ENCODE measurements at regions of chr2 and their contacts with region 1.

Region 1: GRCh38 chr2:24971536-24972314 is at the start of gene DNAJC27:
- DNase-seq: peak; percentile 97 to 99 (median 99)
- ATAC-seq: peak; percentile 93
- H3K4me3 ChIP-seq: peak within 1 kb of the TSS; percentile 90
- H3K4me3 Mint-ChIP-seq: peak within 1 kb of the TSS; percentile 96 to 99 (median 98)
- H3K27ac ChIP-seq: peak within 1 kb of the TSS; percentile 98
- H3K27ac Mint-ChIP-seq: peak within 1 kb of the TSS; percentile 99 to 100 (median 100)
- H3K4me1 ChIP-seq: peaks cover 0 to 17% of the 10 kb centered on the region in 2 donors
- H3K4me1 Mint-ChIP-seq: peaks cover 6 to 46% (median 30%) of the 10 kb centered on the region in 7 donors
- H3K27me3 ChIP-seq: no peaks in the 10 kb centered on the region
- H3K27me3 Mint-ChIP-seq: no peaks in the 10 kb centered on the region
- total RNA-seq, gene DNAJC27: 5.9 to 22.0 (median 18.1) TPM

Region 2: DNA sequence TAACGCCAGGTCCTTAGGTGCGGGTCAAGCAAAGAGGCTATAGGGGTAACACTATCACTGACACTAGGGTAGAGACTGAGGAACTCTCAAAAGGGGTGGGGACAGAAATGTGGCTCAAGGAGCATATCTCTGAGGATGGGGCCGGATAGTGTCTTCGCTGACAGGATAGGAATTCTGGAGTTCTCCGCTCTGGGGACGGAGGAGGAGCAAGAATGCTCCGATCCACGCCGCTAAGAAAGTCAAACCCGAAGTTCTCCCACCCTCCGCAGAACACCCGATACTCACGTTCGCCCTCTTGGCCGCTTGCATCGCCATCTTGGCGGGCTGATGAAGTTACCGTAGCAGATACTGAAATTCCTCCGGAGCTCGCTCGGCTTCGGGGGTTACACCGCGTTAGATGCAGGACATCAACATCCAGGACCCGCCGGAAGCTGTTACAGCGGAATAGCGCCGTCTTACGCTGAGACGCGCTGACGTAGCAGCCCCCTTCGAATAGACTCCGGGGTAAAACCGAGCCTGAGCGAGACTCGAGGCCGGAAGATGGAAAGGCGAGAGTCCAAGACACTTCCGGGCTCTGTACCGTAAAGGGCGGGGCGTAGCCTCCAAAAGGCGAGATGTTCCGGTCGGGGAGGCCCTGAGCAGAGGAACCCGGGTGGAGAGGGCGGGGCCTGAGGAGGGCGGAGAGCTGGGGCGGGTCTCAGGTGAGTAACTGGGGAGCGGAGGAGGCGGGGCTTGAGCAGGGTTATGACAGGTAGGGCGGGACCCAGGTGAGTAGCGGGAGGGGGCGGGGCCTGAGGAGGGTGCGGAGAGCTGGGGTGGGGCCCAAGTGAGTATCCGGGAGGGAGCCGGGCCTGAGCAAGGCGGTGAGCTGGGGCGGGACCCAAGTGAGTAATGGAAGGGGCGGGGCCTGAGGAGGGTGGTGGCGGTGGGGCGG is 895.5 kb before region 1 on chr2 and contains the start of gene SF3B6:
- CTCF ChIA-PET with region 1: no interaction called
- POLR2A ChIA-PET with region 1: no interaction called
- intact Hi-C with region 1: loop called (anchors 1 kb)
- DNase-seq: peak; percentile 97 to 100 (median 100)
- ATAC-seq: peak; percentile 89
- H3K4me3 ChIP-seq: peak within 1 kb of the TSS; percentile 97
- H3K4me3 Mint-ChIP-seq: peak within 1 kb of the TSS; percentile 93 to 99 (median 98)
- H3K27ac ChIP-seq: peak within 1 kb of the TSS; percentile 78
- H3K27ac Mint-ChIP-seq: peak within 1 kb of the TSS; percentile 96 to 99 (median 99)
- H3K4me1 ChIP-seq: peaks cover 13 to 21% of the 10 kb centered on the region in 2 donors
- H3K4me1 Mint-ChIP-seq: peaks cover 14 to 47% (median 42%) of the 10 kb centered on the region in 7 donors
- H3K27me3 ChIP-seq: no peaks in the 10 kb centered on the region
- H3K27me3 Mint-ChIP-seq: no peaks in the 10 kb centered on the region
- total RNA-seq, gene SF3B6: 42.4 to 100 (median 49.7) TPM

Region 3: DNA sequence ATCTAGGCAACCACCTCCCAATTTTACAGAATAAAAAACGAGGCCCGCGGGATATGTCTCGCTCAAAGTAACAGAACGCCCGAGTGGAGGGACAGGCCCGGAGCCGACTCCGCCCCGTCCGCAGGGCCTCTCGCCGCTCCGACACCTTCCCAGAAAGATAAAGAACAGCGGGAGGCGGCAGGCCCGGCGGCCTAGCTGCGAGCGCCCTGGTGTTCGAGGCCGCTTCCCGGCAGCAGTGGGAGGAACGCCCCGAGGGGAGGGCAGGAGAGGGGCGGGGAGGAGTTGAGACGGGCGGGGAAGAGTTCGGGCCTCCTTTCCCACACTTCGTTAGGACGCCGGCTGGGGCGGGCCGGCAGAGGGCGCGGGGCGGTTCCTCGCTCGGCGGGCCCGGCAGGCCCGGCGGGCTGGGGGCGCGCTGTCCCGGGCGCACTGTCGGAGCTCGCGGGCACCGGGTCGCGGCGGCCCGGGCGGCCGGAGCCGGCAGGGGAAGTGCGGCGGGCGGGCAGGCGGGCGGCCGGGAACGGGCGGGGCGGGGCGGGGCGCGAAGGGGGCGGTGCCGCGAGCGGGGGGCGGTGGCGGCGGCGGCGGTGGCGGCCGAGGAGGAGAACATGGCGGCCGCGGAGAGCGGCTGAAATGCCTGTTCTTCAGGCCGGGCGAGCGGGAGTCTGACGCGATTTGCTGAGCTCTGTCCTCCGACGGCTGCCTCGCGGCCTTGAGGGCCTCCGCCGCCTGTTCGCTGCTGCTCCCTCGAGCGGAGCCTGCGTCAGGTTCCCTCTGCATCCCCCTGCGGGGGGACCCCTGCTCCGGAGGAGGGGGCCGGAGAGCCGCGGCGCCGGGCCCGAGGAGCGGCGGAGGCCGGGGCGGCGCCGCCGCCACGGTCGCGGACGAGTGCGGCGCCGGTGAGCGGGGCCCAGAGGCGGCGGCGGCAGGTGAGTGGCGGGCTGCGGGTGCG is 480.8 kb before region 1 on chr2 and contains the start of gene NCOA1:
- CTCF ChIA-PET with region 1: no interaction called
- POLR2A ChIA-PET with region 1: no interaction called
- intact Hi-C with region 1: loop called (anchors 1 kb)
- DNase-seq: peak; percentile 82 to 92 (median 90)
- ATAC-seq: peak; percentile 91
- H3K4me3 ChIP-seq: peak within 1 kb of the TSS; percentile 63
- H3K4me3 Mint-ChIP-seq: peak within 1 kb of the TSS; percentile 80 to 95 (median 90)
- H3K27ac ChIP-seq: peak within 1 kb of the TSS; percentile 93
- H3K27ac Mint-ChIP-seq: peak within 1 kb of the TSS; percentile 87 to 98 (median 93)
- H3K4me1 ChIP-seq: peaks cover 26 to 48% of the 10 kb centered on the region in 2 donors
- H3K4me1 Mint-ChIP-seq: peaks cover 46 to 62% (median 59%) of the 10 kb centered on the region in 7 donors
- H3K27me3 ChIP-seq: no peaks in the 10 kb centered on the region
- H3K27me3 Mint-ChIP-seq: peaks cover 0 to 11% (median 0%) of the 10 kb centered on the region in 5 donors
- total RNA-seq, gene NCOA1: 20.9 to 72.8 (median 46.6) TPM

Region 4: GRCh38 chr2:24855726-24856125 is 116.0 kb before region 1 on chr2:
- CTCF ChIA-PET with region 1: no interaction called
- POLR2A ChIA-PET with region 1: no interaction called
- intact Hi-C with region 1: no loop called
- DNase-seq: no peak
- ATAC-seq: no peak
- H3K4me3 ChIP-seq: no peak overlapping the region
- H3K4me3 Mint-ChIP-seq: no peak overlapping the region
- H3K27ac ChIP-seq: no peak overlapping the region
- H3K27ac Mint-ChIP-seq: no peak overlapping the region
- H3K4me1 ChIP-seq: no peaks in the 10 kb centered on the region
- H3K4me1 Mint-ChIP-seq: peaks cover 0 to 7% (median 0%) of the 10 kb centered on the region in 7 donors
- H3K27me3 ChIP-seq: no peaks in the 10 kb centered on the region
- H3K27me3 Mint-ChIP-seq: no peaks in the 10 kb centered on the region

Region 5: GRCh38 chr2:25041928-25042320 is 70.2 kb after region 1 on chr2 and contains the start of gene EFR3B:
- CTCF ChIA-PET with region 1: no interaction called
- POLR2A ChIA-PET with region 1: no interaction called
- intact Hi-C with region 1: loop called (anchors 1 kb)
- DNase-seq: peak; percentile 77 to 88 (median 86)
- ATAC-seq: peak; percentile 99
- H3K4me3 ChIP-seq: peak within 1 kb of the TSS; percentile 73
- H3K4me3 Mint-ChIP-seq: peak within 1 kb of the TSS; percentile 79 to 91 (median 89)
- H3K27ac ChIP-seq: peak within 1 kb of the TSS; percentile 18
- H3K27ac Mint-ChIP-seq: peak within 1 kb of the TSS in 6 of 9 donors; percentile 8 to 88 (median 54)
- H3K4me1 ChIP-seq: peaks cover 13 to 17% of the 10 kb centered on the region in 2 donors
- H3K4me1 Mint-ChIP-seq: peaks cover 18 to 30% (median 20%) of the 10 kb centered on the region in 7 donors
- H3K27me3 ChIP-seq: peaks cover 7 to 8% of the 10 kb centered on the region in 2 donors
- H3K27me3 Mint-ChIP-seq: peaks cover 34 to 59% (median 37%) of the 10 kb centered on the region in 5 donors
- total RNA-seq, gene EFR3B: 0.05 to 0.08 (median 0.07) TPM in 3 of 5 experiments, not detected in the others

Region 6: DNA sequence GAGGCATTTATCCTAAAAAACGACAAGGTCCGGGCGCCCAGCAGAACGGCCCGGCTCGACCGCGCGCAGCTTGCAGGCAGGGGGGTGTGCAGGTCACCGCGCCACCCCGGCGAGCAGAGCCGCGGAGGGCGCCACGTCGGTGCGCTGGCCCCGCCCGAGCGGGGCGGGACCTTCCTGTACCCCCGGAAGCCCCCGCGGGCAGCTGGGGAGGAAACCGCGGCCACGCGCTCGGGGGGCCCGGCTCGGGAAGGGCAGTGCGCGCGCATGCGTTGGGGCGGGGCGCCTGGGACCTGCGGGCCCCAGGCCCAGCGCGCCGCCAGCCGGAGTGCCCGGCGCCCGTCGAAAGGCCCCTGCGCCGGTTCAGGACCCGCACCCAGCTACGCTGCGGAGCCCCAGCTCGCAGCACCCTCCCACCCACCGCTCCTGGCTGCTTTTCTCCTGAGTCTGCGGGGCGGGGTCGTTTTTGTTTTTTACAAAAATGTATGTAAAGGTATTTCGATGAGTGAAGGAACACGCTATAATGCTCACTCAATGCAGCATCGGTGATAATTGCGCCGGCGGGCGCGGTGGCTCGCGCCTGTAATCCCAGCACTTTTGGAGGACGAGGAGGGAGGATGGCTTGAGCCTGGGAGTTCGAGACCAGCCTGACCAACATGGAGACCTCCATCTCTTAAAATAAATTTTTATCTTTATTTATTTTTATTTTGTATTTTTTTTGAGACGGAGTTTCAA is 244.4 kb after region 1 on chr2:
- CTCF ChIA-PET with region 1: no interaction called
- POLR2A ChIA-PET with region 1: interaction called, 3 read pairs
- intact Hi-C with region 1: loop called in 1 of 2 experiments (anchors 5 kb)
- DNase-seq: peak; percentile 73 to 88 (median 85)
- ATAC-seq: peak; percentile 96
- H3K4me3 ChIP-seq: peak overlapping the region; percentile 61
- H3K4me3 Mint-ChIP-seq: peak overlapping the region; percentile 71 to 88 (median 78)
- H3K27ac ChIP-seq: peak overlapping the region; percentile 74
- H3K27ac Mint-ChIP-seq: peak overlapping the region; percentile 64 to 94 (median 89)
- H3K4me1 ChIP-seq: peaks cover 0 to 6% of the 10 kb centered on the region in 2 donors
- H3K4me1 Mint-ChIP-seq: peaks cover 9 to 33% (median 18%) of the 10 kb centered on the region in 7 donors
- H3K27me3 ChIP-seq: no peaks in the 10 kb centered on the region
- H3K27me3 Mint-ChIP-seq: no peaks in the 10 kb centered on the region

Region 7: DNA sequence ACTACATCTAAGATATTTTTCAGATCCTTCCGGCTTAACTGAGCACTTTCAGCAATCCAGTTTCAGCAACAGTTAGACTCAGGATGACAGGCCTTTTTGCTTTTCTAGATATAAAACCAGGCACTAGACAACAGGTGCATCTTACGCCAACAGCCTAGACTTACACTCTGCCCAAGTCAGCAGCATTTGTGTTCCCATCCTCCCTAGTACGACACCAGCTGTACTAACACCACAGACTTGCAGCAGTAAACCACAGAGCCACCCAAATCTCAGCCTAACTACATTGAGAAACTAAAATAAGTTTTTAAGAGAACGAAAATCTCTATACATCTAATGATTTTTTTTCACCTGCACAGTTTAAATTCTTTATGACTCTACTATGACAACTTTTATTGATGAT is 459.9 kb after region 1 on chr2:
- CTCF ChIA-PET with region 1: no interaction called
- POLR2A ChIA-PET with region 1: no interaction called
- intact Hi-C with region 1: no loop called
- DNase-seq: no peak
- ATAC-seq: no peak
- H3K4me3 ChIP-seq: no peak overlapping the region
- H3K4me3 Mint-ChIP-seq: no peak overlapping the region
- H3K27ac ChIP-seq: no peak overlapping the region
- H3K27ac Mint-ChIP-seq: no peak overlapping the region
- H3K4me1 ChIP-seq: no peaks in the 10 kb centered on the region
- H3K4me1 Mint-ChIP-seq: peaks cover 0 to 13% (median 0%) of the 10 kb centered on the region in 7 donors
- H3K27me3 ChIP-seq: no peaks in the 10 kb centered on the region
- H3K27me3 Mint-ChIP-seq: no peaks in the 10 kb centered on the region

Region 8: DNA sequence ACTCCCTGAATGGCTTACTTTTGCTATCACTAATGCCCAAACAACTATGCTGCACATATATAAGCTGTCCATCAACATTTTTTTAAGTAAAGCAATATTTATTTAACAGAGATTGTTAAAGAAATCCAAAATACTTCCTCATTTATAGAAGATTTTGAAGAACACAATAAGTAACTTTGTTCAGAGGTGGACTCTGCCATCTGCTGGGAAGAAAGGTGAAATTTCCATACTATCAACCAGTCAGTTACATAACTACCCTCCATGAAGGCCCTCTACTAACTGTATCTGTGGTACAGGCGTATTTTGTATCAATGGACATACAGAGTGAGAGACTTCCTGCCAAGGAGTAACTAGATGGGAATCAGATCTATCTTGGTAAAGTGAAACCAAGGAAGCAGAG is 595.7 kb after region 1 on chr2:
- CTCF ChIA-PET with region 1: no interaction called
- POLR2A ChIA-PET with region 1: no interaction called
- intact Hi-C with region 1: loop called in 1 of 2 experiments (anchors 10 kb)
- DNase-seq: peak in 4 of 9 donors; percentile 6 to 27 (median 16)
- ATAC-seq: peak; percentile 67
- H3K4me3 ChIP-seq: no peak overlapping the region
- H3K4me3 Mint-ChIP-seq: no peak overlapping the region
- H3K27ac ChIP-seq: no peak overlapping the region
- H3K27ac Mint-ChIP-seq: peak overlapping the region in 1 of 9 donors; percentile 47
- H3K4me1 ChIP-seq: no peaks in the 10 kb centered on the region
- H3K4me1 Mint-ChIP-seq: peaks cover 0 to 14% (median 4%) of the 10 kb centered on the region in 7 donors
- H3K27me3 ChIP-seq: no peaks in the 10 kb centered on the region
- H3K27me3 Mint-ChIP-seq: no peaks in the 10 kb centered on the region

Region 9: DNA sequence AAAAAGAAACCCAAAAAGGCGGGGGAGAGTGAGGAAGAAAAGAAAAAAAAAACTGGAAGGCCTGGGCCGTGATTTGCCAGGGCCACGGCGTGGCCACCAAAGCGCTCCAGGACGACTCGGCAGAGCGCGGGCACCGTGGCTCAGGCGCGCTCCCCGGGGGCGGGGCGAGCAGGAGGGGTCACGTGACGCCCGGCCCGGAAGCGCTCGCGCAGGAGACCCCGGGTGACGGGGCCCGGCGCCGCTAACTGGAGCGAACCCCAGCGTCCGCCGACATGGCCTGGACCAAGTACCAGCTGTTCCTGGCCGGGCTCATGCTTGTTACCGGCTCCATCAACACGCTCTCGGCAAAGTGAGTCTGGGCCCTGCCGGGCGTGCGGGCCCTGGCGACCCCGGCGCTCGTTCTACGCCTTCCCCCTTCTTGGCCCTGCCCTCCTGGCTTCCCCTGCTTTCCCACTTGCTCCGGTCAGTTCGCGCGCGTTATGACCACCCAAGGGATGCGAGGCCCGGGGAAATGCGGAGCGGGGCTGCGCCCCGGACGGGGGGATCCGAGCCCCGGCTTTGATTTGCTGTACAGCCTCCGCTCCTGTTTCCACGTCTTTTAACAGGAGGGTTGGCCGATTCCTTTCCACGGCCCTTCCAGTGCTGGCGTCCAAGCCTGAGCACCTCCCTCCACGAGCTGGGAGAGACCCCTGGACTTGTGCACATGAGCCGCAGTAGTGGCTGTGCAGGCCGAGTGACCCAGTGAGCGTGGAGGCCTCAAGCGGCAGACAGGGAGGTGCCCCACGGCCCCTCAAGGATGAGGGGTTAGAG is 1792.6 kb after region 1 on chr2 and contains the start of gene SLC35F6:
- CTCF ChIA-PET with region 1: no interaction called
- POLR2A ChIA-PET with region 1: no interaction called
- intact Hi-C with region 1: loop called in 1 of 2 experiments (anchors 5 kb)
- DNase-seq: peak; percentile 70 to 90 (median 86)
- ATAC-seq: peak; percentile 95
- H3K4me3 ChIP-seq: peak within 1 kb of the TSS; percentile 92
- H3K4me3 Mint-ChIP-seq: peak within 1 kb of the TSS; percentile 85 to 97 (median 94)
- H3K27ac ChIP-seq: peak within 1 kb of the TSS; percentile 82
- H3K27ac Mint-ChIP-seq: peak within 1 kb of the TSS; percentile 62 to 97 (median 91)
- H3K4me1 ChIP-seq: peaks cover 23% of the 10 kb centered on the region in 2 donors
- H3K4me1 Mint-ChIP-seq: peaks cover 28 to 54% (median 39%) of the 10 kb centered on the region in 7 donors
- H3K27me3 ChIP-seq: no peaks in the 10 kb centered on the region
- H3K27me3 Mint-ChIP-seq: peaks cover 0 to 6% (median 0%) of the 10 kb centered on the region in 5 donors
- total RNA-seq, gene SLC35F6: 17.3 to 22.5 (median 19.9) TPM

Measured in naive thymus-derived CD4-positive, alpha-beta T cell (primary cell).